Common myeloid progenitor, CD34-positive (primary cell): ENCODE measurements at regions of chr21 and their contacts with region 1.

Region 1: GRCh38 chr21:43778469-43779335 is 2.6 kb upstream of the CSTB start:
- DNase-seq: peak in 2 of 3 donors; percentile 25 to 46
- H3K4me3 ChIP-seq: no peak overlapping the region
- H3K27ac ChIP-seq: no peak overlapping the region
- H3K4me1 ChIP-seq: peaks cover 0 to 34% (median 21%) of the 10 kb centered on the region in 4 experiments
- H3K27me3 ChIP-seq: no peaks in the 10 kb centered on the region

Region 2: DNA sequence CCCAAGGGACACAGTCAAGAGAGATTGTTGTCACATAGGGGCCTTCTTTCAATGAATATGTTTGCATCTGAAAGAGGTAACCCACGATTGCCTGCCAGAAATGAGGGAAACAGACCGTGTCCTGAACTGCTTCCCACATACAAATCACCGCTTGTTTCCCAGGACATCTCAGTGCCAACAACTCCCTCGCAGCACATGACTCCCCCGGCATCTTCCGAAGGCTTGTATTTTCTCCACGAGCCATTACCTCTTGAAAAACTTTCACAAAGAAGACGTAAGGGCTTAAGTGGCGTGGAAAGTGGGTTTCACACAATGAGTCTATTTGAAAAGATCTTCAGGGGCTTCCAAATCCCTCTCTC is 1156.9 kb before region 1 on chr21:
- CTCF ChIA-PET with region 1: no interaction called
- POLR2A ChIA-PET with region 1: no interaction called
- DNase-seq: no peak
- H3K4me3 ChIP-seq: no peak overlapping the region
- H3K27ac ChIP-seq: no peak overlapping the region
- H3K4me1 ChIP-seq: peaks cover 0 to 19% (median 16%) of the 10 kb centered on the region in 4 experiments
- H3K27me3 ChIP-seq: peaks cover 0 to 6% (median 0%) of the 10 kb centered on the region in 5 experiments

Region 3: GRCh38 chr21:43306911-43307676 is 471.6 kb before region 1 on chr21:
- CTCF ChIA-PET with region 1: no interaction called
- POLR2A ChIA-PET with region 1: no interaction called
- DNase-seq: peak in 2 of 3 donors; percentile 31 to 34
- H3K4me3 ChIP-seq: no peak overlapping the region
- H3K27ac ChIP-seq: no peak overlapping the region
- H3K4me1 ChIP-seq: no peaks in the 10 kb centered on the region
- H3K27me3 ChIP-seq: peaks cover 0 to 3% (median 0%) of the 10 kb centered on the region in 5 experiments

Region 4: GRCh38 chr21:43767984-43768867 is 10.5 kb before region 1 on chr21:
- CTCF ChIA-PET with region 1: interaction called, 11 read pairs
- POLR2A ChIA-PET with region 1: no interaction called
- DNase-seq: peak in 2 of 3 donors; percentile 52 to 60
- H3K4me3 ChIP-seq: no peak overlapping the region
- H3K27ac ChIP-seq: peak overlapping the region in 1 of 2 experiments; percentile 61
- H3K4me1 ChIP-seq: peaks cover 0 to 20% (median 7%) of the 10 kb centered on the region in 4 experiments
- H3K27me3 ChIP-seq: no peaks in the 10 kb centered on the region

Region 5: GRCh38 chr21:43805275-43805800 is 26.6 kb after region 1 on chr21:
- CTCF ChIA-PET with region 1: no interaction called
- POLR2A ChIA-PET with region 1: no interaction called
- DNase-seq: peak; percentile 77 to 95 (median 92)
- H3K4me3 ChIP-seq: no peak overlapping the region
- H3K27ac ChIP-seq: peak overlapping the region in 1 of 2 experiments; percentile 40
- H3K4me1 ChIP-seq: peaks cover 0 to 20% (median 19%) of the 10 kb centered on the region in 4 experiments
- H3K27me3 ChIP-seq: no peaks in the 10 kb centered on the region

Region 6: GRCh38 chr21:43984905-43985689 is 206.4 kb after region 1 on chr21:
- CTCF ChIA-PET with region 1: no interaction called
- POLR2A ChIA-PET with region 1: no interaction called
- DNase-seq: peak in 2 of 3 donors; percentile 27 to 29
- H3K4me3 ChIP-seq: no peak overlapping the region
- H3K27ac ChIP-seq: no peak overlapping the region
- H3K4me1 ChIP-seq: peaks cover 0 to 8% (median 4%) of the 10 kb centered on the region in 4 experiments
- H3K27me3 ChIP-seq: no peaks in the 10 kb centered on the region